PC-9 (cell line): ENCODE measurements at regions of chr15 and their contacts with region 1.

Region 1: DNA sequence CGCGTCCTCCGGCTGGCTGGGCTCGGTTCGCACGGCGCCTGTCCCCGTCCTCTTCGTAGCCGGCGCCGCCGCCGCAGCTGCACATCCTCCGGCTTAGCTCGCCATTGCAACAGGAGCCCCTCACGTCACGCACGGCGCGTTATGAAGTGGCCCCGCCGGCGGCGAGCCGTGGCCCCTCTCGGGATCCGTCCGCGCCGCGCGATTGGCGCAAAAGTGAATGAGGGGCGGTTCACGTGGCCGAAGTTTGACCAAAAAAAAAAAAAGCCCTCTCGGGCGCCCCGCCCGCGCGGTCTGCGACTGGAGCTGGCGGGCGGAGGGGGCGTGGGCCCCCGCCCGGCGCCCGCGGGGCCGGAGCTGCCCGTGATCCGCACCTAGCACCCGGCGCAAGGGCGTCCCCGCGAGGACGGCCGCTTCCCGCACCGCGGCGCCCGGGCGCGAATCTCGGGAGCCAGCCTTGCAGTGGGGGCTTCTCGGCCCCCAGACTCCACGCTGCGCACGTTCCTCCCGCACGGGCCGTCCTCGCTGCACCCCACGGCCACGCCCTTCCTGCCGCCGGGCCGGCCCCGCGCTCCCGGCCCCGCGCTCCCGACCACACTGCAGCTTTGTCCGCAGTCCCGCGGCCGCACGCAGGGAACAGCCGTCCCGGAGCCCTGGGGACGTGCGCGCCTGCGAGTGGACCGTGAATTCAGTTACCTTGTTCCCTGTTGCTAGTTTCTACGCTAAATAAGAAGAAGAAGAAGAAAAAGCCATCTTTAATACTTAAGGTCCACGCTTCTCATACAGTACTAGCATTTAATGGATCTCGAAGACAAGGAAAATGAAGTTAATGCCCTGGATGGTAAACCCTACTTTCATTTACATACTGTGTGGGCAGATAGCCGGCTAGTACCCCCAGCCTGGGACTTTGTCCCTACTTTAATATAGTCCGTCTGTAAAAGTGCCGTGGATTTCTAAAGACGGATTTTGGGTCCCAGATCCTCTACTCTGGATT is at the start of gene CHSY1:
- DNase-seq: peak; percentile 63 to 83
- H3K4me3 ChIP-seq: peak within 1 kb of the TSS; percentile 87
- H3K27ac ChIP-seq: no peak within 1 kb of the TSS
- H3K4me1 ChIP-seq: peaks cover 16% of the 10 kb centered on the region
- H3K27me3 ChIP-seq: no peaks in the 10 kb centered on the region
- CTCF ChIP-seq: no peak
- total RNA-seq, gene CHSY1: 10.3 and 10.7 TPM in 2 replicates

Region 2: DNA sequence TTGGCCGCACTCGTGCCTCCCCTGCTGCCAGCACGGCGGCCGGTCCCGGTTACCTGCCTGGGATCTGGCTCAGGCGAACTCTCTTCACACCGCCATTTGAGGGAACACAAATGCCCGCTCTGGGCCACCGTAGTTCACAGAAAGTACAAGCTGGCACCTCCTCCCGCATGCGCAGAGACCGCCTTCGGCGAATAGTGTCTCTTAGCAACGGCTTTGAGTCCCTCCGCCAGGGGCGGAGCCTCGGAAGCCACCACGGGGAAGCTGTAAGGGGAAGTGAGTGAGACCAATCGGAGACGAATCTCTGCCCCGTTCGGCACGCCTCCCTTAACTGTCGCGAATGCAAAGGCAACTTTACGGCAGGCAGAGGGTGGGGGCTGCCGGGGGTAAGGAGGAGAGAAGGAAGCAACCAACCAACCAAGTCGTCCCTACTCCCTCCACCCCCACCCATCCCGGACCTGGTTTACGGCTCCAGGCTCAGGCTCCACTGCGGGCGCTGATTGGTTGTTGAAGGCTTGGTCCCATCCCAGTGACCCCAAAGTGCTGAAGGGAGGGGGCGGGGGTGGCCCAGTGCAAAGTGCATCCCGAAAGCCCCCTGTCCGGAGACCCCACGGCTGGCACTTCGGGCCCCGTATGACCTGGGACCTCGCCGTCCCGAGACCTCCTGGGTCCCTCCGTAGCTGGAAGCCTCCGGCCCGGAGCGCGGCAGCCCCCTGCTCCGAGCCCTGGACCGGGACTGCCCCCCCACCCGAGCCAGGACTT is 649.9 kb before region 1 on chr15 and contains the starts of genes ASB7 and LINS1:
- CTCF ChIA-PET with region 1: no interaction called
- POLR2A ChIA-PET with region 1: no interaction called
- intact Hi-C with region 1: loop called (anchors 5 kb)
- DNase-seq: peak; percentile 99
- H3K4me3 ChIP-seq: peak within 1 kb of the TSS; percentile 86
- H3K27ac ChIP-seq: peak within 1 kb of the TSS; percentile 26
- H3K4me1 ChIP-seq: peaks cover 20% of the 10 kb centered on the region
- H3K27me3 ChIP-seq: no peaks in the 10 kb centered on the region
- CTCF ChIP-seq: no peak
- total RNA-seq, gene ASB7: 17.9 and 19.0 TPM in 2 replicates
- total RNA-seq, gene LINS1: 7.0 and 10.9 TPM in 2 replicates

Region 3: DNA sequence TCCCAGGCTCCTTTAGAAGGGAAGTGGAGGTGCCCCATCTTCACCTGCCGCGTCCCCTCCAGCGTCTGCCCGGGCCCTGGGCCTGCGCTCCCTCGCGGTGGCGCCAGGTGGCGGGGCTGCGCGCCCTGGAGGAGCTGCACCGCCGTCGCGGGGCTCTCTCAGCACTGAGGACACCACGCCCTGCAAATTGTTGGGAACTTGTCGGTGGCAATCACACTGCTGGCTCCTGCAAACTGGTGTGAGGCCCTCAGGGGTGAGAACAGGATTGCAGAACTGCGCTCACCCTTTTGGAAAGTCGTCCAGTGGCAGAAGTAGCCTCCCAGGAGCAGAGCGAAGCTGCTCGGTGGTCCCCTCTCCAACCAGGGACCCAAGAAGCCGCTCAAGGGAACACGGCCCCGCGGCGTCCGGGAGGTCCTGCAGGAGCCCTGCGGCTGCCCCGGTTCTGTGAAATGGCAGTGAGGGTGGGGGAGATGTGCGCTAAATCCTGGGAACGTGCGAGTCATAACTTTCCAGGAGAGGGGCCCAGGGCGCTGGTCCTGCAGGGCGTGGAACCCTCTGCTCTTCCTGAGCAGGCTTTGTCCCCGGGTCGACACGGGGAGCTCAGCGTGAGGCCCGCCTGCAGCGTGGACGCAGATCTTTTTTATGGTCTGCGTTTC is 334.0 kb before region 1 on chr15:
- CTCF ChIA-PET with region 1: no interaction called
- POLR2A ChIA-PET with region 1: no interaction called
- intact Hi-C with region 1: loop called (anchors 10 kb)
- DNase-seq: peak; percentile 80 to 89
- H3K4me3 ChIP-seq: peak overlapping the region; percentile 72
- H3K27ac ChIP-seq: no peak overlapping the region
- H3K4me1 ChIP-seq: no peaks in the 10 kb centered on the region
- H3K27me3 ChIP-seq: no peaks in the 10 kb centered on the region
- CTCF ChIP-seq: peak; percentile 85

Region 4: DNA sequence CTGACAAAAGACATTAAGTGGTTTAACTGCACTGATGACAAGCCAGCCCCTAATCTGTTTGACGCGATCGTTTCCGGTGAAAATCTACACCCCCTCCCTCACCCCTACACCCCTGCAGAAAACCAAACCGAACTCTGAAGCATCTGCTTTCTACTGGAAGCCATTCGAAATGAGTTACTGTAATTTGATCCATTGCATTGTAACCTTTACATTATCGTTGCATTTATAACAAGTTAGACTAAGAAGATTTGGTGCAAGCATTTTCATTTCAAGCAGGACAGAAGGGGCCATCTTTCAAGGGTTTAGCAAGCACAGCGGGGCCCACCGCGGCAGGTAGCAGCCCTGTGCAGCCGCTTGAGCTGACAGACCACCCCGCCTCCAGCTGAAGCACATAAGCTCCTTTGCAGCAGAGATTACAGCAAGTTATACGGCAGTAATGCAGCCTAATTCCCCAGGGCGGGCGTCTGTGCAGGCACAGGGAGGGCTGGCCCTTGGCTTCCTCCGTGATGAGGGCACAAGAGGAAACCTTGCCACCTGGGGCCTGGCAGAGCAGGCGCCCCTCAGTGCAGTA is 79.5 kb before region 1 on chr15:
- CTCF ChIA-PET with region 1: no interaction called
- POLR2A ChIA-PET with region 1: interaction called, 10 read pairs
- intact Hi-C with region 1: no loop called
- DNase-seq: no peak
- H3K4me3 ChIP-seq: no peak overlapping the region
- H3K27ac ChIP-seq: no peak overlapping the region
- H3K4me1 ChIP-seq: peaks cover 10% of the 10 kb centered on the region; the same call in 1 of the 2 replicates
- H3K27me3 ChIP-seq: no peaks in the 10 kb centered on the region
- CTCF ChIP-seq: no peak

Region 5: DNA sequence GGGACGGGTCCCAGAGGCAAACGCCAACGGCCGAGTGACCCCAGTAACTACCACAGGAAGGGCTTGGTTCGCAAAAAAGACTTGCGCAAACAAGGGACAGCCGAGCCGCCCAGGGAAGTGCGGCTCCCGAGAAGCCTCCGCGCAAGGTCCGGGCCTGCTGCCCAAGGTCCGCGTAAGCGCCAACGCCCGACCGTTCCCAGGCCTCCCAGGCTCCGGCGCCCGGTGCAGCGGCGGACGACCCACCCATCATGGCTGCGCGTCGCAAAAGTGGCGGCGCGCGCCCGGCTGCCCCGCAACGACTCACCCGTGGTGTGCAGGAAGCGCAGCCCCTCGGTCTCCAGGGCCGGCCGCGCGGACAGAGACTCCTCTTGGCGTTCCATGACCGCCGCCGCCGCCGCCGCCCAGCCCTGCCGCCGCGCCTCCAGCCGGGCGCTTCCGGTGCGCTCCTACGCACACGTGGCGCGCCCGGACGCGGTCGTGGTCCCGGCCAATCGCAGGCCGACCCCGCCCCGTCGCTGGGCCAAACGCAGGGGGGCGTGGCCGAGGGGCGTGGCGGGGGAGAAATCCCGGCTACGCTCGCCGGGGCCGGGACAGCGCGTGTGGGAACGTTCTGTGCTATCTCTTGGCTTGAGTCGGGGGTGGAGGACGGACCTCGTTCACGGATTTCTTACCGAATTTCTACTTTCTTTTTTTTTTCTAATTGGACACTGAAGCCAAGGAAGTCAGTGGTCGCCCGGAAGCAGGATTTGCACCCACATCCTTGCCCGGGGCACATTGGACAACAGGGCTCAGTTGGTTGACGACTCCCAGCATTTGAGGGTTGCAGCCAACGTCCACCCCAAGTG is 25.1 kb after region 1 on chr15 and contains the start of gene SELENOS:
- CTCF ChIA-PET with region 1: no interaction called
- POLR2A ChIA-PET with region 1: no interaction called
- intact Hi-C with region 1: loop called (anchors 1 kb)
- DNase-seq: peak; percentile 68 to 91
- H3K4me3 ChIP-seq: peak within 1 kb of the TSS; percentile 81
- H3K27ac ChIP-seq: peak within 1 kb of the TSS; percentile 47; the same call in 1 of the 2 replicates
- H3K4me1 ChIP-seq: peaks cover 18% of the 10 kb centered on the region
- H3K27me3 ChIP-seq: no peaks in the 10 kb centered on the region
- CTCF ChIP-seq: no peak
- total RNA-seq, gene SELENOS: 20.8 and 28.6 TPM in 2 replicates